Ascending aorta (tissue), 2 donors: ENCODE measurements at regions of chr2 and their contacts with region 1.

Region 1: GRCh38 chr2:138827426-138828054 is 47.4 kb upstream of the NXPH2 start:
- DNase-seq: no peak
- H3K4me3 ChIP-seq: no peak overlapping the region
- H3K27ac ChIP-seq: no peak overlapping the region
- H3K4me1 ChIP-seq: no peaks in the 10 kb centered on the region
- H3K27me3 ChIP-seq: no peaks in the 10 kb centered on the region
- CTCF ChIP-seq: peak in 2 of 3 experiments; percentile 62 to 74

Region 2: GRCh38 chr2:137865954-137866540 is 961.5 kb before region 1 on chr2:
- intact Hi-C with region 1: loop called (anchors 5 kb)
- DNase-seq: no peak
- H3K4me3 ChIP-seq: no peak overlapping the region
- H3K27ac ChIP-seq: no peak overlapping the region
- H3K4me1 ChIP-seq: no peaks in the 10 kb centered on the region
- H3K27me3 ChIP-seq: no peaks in the 10 kb centered on the region
- CTCF ChIP-seq: peak in 2 of 3 experiments; percentile 16 to 37